ENCODE measurements at regions of chr21 and their contacts with region 1.

Region 1: DNA sequence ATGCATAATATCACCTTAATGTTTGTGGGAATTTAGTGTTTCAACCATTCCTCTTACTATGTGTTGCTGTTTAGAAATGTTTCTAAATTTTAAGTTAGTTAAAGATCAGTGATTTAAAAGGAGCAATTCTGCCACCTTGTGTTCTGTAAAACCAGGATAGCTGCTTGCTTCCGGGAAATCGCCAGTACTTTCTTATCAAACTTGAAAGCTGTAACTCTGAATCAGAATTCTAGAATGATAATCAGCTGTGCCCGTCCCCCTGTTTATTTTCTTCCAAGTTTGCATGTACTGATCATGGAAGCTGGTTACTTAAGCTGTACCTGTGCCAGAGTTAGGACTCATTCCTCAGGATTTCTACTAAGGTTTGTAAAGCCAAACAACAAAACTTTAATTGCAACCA is 656.4 kb downstream of the LTN1 start:
- DNase-seq: no peak
- ATAC-seq: peak; percentile 64

Region 2: GRCh38 chr21:26850108-26850643 is 1486.1 kb before region 1 on chr21:
- intact Hi-C with region 1: loop called (anchors 2 kb)
- DNase-seq: no peak
- ATAC-seq: no peak

Region 3: GRCh38 chr21:27149034-27149433 is 1187.3 kb before region 1 on chr21:
- intact Hi-C with region 1: no loop called
- DNase-seq: no peak
- ATAC-seq: no peak

Region 4: GRCh38 chr21:27759820-27760219 is 576.5 kb before region 1 on chr21:
- intact Hi-C with region 1: loop called (anchors 2 kb)
- DNase-seq: no peak
- ATAC-seq: no peak

Region 5: DNA sequence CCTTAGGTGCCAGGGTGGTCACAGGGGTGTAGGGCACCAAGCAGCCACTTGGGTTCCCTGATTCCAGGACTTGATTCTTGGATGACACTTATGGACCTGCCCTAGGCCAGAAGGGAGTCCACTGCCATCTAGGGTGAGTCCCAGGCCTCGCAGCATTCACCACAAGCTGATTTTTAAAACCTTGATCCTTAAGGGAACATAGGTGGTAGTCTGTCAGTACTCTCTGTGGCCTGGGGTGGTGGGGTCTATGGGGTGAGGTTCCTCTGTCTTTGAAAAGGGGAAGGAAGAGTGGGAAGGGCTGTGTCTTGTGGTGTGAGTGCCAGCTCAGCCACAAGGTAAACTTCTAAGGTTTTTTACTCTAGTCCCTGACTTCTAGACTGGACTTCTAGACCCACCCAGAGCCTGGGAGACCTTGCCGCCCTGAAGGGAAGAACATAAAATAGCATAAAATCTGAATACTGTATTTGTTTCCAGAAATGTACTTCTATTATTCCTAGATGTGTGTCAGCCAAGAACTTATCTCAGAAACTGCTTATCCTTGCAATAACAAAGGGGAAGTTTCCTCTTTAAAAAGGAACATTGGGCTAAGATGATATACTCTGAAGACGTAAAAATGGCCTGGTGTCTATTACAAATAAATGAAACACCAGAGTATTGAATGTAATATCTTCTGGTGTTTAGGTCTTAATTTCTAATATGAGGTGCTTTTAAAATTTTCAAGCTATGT is 101.0 kb before region 1 on chr21:
- intact Hi-C with region 1: loop called (anchors 5 kb)
- DNase-seq: no peak
- ATAC-seq: peak; percentile 20

Region 6: DNA sequence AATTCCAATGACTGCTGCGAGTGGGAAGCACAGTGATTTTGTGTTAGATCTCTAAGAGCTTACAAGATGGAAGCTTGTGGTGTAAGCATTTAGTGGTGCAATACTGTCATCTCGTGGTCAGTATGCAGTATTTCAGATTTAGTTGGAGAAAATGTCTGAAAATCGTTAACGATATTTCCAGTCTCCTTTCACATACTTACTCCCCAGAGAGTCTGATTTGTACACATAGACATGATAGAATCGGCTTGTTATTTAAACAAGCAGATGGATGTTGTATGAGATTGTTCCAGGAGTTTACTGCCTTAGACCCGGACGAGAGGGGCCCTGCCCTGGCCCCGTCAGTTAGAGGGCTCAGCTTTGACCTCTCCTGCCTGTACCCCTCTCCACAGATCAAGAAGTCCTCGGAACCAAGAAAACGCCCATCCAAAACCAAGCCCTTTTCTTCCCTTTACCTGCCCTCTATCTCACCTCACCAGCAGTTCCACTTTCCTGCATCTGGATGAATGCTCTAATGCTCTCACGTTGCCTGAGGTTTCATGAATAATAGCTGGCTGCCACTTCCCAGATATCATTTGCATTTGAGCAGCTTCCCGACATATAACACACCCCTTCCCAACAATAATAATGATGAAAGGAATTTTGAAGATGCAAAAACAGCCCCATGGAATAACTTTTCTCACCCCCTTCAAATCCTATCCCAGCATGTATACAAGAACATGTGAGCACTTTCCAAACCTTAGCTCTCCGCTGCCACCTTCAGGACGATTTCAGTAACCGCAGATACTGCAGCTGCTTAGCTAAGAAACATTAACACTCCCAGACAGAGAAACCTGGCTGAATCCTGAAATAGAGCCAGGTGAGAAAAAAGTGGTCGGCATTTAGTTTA is 409.1 kb after region 1 on chr21:
- intact Hi-C with region 1: loop called (anchors 1 kb)
- DNase-seq: no peak
- ATAC-seq: peak; percentile 89

Measured in Right ventricle myocardium inferior (tissue), 1 donor.